Aorta (tissue), 5 donors: ENCODE measurements at regions of chr1 and their contacts with region 1.

Region 1: GRCh38 chr1:228486596-228487335 is 416 bp upstream of the RNF187 start:
- DNase-seq: peak; percentile 89 to 90
- ATAC-seq: peak; percentile 92
- H3K4me3 ChIP-seq: peak overlapping the region; percentile 68 to 98
- H3K27ac ChIP-seq: peak overlapping the region; percentile 45 to 99
- H3K4me1 ChIP-seq: no peaks in the 10 kb centered on the region
- H3K27me3 ChIP-seq: no peaks in the 10 kb centered on the region

Region 2: GRCh38 chr1:228378090-228378872 is 108.5 kb before region 1 on chr1:
- intact Hi-C with region 1: loop called in 1 of 2 experiments (anchors 10 kb)
- DNase-seq: peak; percentile 90 to 93
- ATAC-seq: peak; percentile 82
- H3K4me3 ChIP-seq: peak overlapping the region in 1 of 2 donors; percentile 17
- H3K27ac ChIP-seq: no peak overlapping the region
- H3K4me1 ChIP-seq: no peaks in the 10 kb centered on the region
- H3K27me3 ChIP-seq: no peaks in the 10 kb centered on the region

Region 3: DNA sequence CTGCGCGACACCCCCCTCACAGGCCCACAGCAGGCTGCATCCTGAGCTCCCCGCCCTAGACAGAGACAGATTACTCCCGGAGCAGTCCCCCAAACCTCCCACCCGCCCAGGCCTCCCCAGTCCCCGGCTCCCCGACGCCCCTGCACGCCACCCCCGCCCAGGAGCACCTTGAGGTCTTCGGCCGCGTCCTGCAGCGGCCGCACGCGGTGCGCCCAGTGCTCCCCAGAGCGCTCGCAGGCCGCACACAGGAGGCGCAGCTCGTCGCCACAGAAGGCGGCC is 80.8 kb before region 1 on chr1:
- intact Hi-C with region 1: loop called in 1 of 2 experiments (anchors 2 kb)
- DNase-seq: peak in 1 of 2 donors; percentile 77
- ATAC-seq: peak; percentile 4
- H3K4me3 ChIP-seq: peak overlapping the region; percentile 61 to 74
- H3K27ac ChIP-seq: no peak overlapping the region
- H3K4me1 ChIP-seq: no peaks in the 10 kb centered on the region
- H3K27me3 ChIP-seq: no peaks in the 10 kb centered on the region